AG04450 (cell line): ENCODE measurements at regions of chr2 and their contacts with region 1.

Region 1: GRCh38 chr2:28958689-28959088 is 22.4 kb upstream of the TOGARAM2 start:
- DNase-seq: peak; percentile 50
- H3K4me3 ChIP-seq: no peak overlapping the region
- H3K27ac ChIP-seq: no peak overlapping the region
- H3K27me3 ChIP-seq: no peaks in the 10 kb centered on the region
- CTCF ChIP-seq: peak; percentile 64

Region 2: DNA sequence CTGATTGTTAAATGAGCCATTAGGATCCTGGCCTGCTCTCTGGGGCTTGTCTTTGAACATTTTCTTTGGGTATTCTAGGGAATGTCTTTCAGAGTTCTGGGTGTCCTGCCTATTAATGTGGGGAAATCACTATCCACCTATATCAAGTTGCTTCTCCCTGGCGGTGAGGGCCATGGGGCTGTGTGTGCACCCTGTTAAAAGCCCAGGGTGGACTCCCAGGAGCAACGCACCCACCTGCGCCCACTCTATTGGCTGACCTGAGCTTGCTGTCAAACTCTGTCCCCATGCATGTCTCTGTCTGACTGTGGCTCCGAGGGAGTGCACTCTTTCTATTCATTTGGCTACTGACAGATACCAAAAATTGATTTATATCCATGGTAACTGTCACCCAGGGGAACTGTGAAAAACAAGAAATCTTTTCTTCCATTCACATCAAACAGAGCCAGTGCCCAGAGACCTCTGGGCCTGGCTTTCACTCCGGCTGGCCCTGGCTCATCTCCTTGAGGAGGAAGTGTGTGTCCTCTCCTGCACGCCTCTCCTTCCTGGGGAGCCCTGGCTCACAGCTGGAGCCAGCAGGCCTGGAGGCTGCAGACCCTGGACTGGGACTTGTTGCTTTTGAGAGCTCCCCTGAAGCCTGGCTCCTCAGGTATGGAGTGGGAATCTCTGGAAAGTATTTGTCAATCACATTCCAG is 11.9 kb after region 1 on chr2:
- CTCF ChIA-PET with region 1: interaction called, 11 read pairs
- POLR2A ChIA-PET with region 1: no interaction called
- DNase-seq: no peak
- H3K4me3 ChIP-seq: no peak overlapping the region
- H3K27ac ChIP-seq: no peak overlapping the region
- H3K27me3 ChIP-seq: peaks cover 10% of the 10 kb centered on the region
- CTCF ChIP-seq: no peak

Region 3: GRCh38 chr2:29011418-29012060 is 52.9 kb after region 1 on chr2:
- CTCF ChIA-PET with region 1: interaction called, 13 read pairs
- POLR2A ChIA-PET with region 1: no interaction called
- DNase-seq: no peak
- H3K4me3 ChIP-seq: no peak overlapping the region
- H3K27ac ChIP-seq: no peak overlapping the region
- H3K27me3 ChIP-seq: no peaks in the 10 kb centered on the region
- CTCF ChIP-seq: 0 out of 2 replicates have a peak, but pooled peaks have one; percentile 9

Region 4: GRCh38 chr2:29053670-29054400 is 95.1 kb after region 1 on chr2:
- CTCF ChIA-PET with region 1: no interaction called
- POLR2A ChIA-PET with region 1: no interaction called
- DNase-seq: no peak
- H3K4me3 ChIP-seq: no peak overlapping the region
- H3K27ac ChIP-seq: no peak overlapping the region
- H3K27me3 ChIP-seq: peaks cover 5% of the 10 kb centered on the region
- CTCF ChIP-seq: no peak

Region 5: GRCh38 chr2:29130295-29130694 is 171.6 kb after region 1 on chr2:
- CTCF ChIA-PET with region 1: interaction called, 11 read pairs
- POLR2A ChIA-PET with region 1: no interaction called
- DNase-seq: no peak
- H3K4me3 ChIP-seq: peak overlapping the region; percentile 43
- H3K27ac ChIP-seq: peak overlapping the region; percentile 97
- H3K27me3 ChIP-seq: no peaks in the 10 kb centered on the region
- CTCF ChIP-seq: no peak

Region 6: DNA sequence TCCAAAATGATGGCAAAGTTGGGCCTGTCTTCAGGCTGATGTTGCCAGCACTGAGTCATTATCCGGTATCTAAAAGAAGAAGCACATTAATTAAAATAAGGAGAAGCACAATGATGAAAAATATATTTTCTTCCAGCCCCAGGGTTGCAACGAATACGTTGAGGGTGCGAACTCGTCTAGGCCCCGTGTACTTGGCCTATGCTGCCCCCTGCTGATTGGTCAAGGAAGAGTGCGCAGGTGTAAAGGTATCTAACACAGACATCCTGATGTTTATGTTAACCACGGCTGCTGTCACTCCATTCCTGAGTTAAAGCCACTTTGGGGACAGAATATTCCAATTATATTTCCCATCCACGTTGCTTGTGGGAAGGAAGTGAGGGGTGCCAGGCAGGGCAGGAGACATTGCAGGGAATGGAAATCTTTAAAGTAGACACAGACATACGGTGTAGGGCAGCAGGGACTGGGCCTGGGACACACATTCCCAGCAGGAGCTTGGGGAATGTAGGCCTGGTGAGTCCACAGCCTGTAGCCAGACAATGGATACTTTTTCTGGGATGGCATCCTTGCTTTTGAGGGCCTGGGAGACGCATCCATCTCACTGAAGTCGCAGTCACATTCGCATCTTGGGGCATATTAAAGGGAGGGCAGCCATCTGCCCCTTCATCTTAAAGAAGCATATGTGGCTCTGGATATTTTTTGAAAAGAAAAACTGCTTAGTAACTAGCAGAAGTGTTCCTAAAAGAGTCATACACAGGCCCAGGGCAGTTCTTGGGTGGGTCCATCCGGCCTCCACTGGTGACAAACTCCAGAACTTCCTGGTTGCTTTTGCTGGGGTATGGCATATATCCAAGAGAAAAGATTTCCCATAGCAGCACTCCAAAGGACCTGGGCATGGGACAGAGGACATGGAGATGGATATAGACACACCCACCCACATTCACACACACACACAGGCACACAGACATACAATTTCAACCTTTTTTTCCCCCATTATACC is 238.4 kb after region 1 on chr2:
- CTCF ChIA-PET with region 1: interaction called, 15 read pairs
- POLR2A ChIA-PET with region 1: no interaction called
- DNase-seq: peak; percentile 18
- H3K4me3 ChIP-seq: no peak overlapping the region
- H3K27ac ChIP-seq: no peak overlapping the region
- H3K27me3 ChIP-seq: no peaks in the 10 kb centered on the region
- CTCF ChIP-seq: peak; percentile 84